OCI-LY7 (cell line): ENCODE measurements at regions of chr12 and their contacts with region 1.

Region 1: DNA sequence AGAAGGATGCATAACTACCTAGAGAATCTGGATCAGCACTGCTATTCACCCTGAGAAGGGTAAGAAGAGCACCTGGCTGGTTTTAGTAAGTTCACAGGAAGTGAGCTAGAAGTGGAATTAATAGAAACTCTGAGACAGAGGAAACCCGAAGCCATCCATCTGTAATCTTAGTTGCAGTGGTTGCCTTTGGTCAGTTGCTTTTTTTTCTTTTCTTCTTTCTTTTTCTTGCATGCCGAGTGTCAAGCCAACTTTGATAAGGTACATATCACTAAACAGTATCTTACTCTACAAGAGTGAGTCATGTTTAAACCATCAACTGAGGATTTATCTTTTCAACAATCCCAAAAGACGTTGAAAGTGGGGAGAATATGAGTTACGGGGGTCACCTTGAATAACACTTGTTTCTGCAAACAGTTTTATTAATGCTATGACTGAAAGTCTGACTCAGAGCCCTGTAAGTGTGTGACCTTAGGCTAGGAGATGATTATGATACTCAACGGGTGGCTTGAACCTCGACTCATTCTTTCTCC is 26.7 kb downstream of the C12orf75 start:
- DNase-seq: peak; percentile 88
- H3K4me3 ChIP-seq: peak overlapping the region; percentile 64
- H3K27ac ChIP-seq: peak overlapping the region; percentile 95
- H3K4me1 ChIP-seq: peaks cover 80% of the 10 kb centered on the region
- CTCF ChIP-seq: no peak

Region 2: GRCh38 chr12:105319691-105320209 is 37.5 kb before region 1 on chr12:
- CTCF ChIA-PET with region 1: interaction called, 4 read pairs
- POLR2A ChIA-PET with region 1: interaction called, 21 read pairs
- intact Hi-C with region 1: loop called (anchors 5 kb)
- DNase-seq: peak; percentile 73
- H3K4me3 ChIP-seq: no peak overlapping the region
- H3K27ac ChIP-seq: no peak overlapping the region
- H3K4me1 ChIP-seq: peaks cover 53% of the 10 kb centered on the region
- CTCF ChIP-seq: peak; percentile 69

Region 3: DNA sequence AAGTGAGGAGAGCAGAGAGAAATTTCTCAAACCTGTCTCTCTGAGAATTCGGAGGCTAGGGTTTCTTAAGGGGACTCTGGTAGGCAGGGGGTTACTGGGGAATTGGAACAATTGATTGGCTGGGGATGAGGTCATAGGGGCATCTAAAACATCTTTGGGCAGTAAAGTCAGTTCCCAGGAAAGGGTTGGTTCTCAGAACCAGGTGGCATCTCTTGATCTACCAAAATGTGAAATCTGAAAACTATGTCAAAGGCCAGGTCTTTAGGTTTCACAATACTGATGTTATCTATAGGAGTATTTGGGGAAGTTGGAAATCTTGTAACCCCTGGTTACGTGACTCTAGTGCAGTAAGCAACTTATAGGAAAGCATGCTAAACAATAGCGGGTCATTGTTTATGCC is 19.8 kb before region 1 on chr12:
- CTCF ChIA-PET with region 1: no interaction called
- POLR2A ChIA-PET with region 1: interaction called, 157 read pairs
- intact Hi-C with region 1: no loop called
- DNase-seq: no peak
- H3K4me3 ChIP-seq: no peak overlapping the region
- H3K27ac ChIP-seq: no peak overlapping the region
- H3K4me1 ChIP-seq: peaks cover 60% of the 10 kb centered on the region
- CTCF ChIP-seq: no peak